CD14-positive monocyte (primary cell): ENCODE measurements at regions of chr19 and their contacts with region 1.

Region 1: GRCh38 chr19:1438035-1438932 is at the start of gene RPS15:
- DNase-seq: peak; percentile 89 to 96 (median 96)
- H3K4me3 ChIP-seq: peak within 1 kb of the TSS; percentile 52 to 93 (median 82)
- H3K4me3 Mint-ChIP-seq: peak within 1 kb of the TSS; percentile 89 to 95
- H3K27ac ChIP-seq: peak within 1 kb of the TSS; percentile 85 to 88
- H3K27ac Mint-ChIP-seq: peak within 1 kb of the TSS; percentile 95 to 99 (median 99)
- H3K4me1 ChIP-seq: peaks cover 13 to 22% of the 10 kb centered on the region in 2 donors
- H3K4me1 Mint-ChIP-seq: peaks cover 27% of the 10 kb centered on the region
- H3K27me3 ChIP-seq: no peaks in the 10 kb centered on the region
- H3K27me3 Mint-ChIP-seq: peaks cover 0 to 4% (median 1%) of the 10 kb centered on the region in 3 donors
- CTCF ChIP-seq: peak; percentile 97
- polyA plus RNA-seq, gene RPS15: 1,318 to 3,451 (median 1,526) TPM

Region 2: DNA sequence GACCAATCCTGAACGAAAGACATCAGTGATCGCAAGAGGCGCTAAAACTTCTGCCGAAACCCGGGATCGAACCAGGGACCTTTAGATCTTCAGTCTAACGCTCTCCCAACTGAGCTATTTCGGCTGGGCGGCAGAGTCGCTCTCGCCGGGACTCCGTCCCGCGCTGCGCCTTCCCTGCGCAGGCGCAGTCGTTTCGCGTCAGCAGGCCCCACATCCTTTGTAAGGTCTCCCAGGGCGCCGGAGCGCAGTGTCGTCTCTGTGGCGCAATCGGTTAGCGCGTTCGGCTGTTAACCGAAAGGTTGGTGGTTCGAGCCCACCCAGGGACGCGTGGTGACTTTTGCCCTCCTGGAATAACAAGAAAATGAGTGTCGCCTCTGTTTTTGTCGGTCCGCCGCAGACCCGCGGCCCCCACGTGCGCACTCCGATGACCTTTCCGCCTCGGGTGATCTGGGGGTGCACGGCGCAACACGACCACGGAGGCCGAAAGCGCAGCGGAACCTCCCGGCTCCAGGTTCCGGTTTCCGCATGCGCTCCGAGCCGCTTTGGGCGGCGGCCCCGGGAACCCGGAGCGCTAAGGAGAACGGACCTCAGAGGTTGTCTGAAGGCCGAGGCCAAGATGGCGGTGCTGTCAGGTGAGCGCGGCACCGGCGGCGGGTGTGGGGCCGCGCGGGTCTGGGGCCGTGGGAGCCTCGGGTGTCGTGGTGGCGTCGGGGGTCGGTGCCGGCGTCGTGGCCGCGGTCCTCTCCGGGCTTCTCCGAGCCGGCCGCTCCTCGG is 54.8 kb before region 1 on chr19 and contains the start of gene NDUFS7:
- intact Hi-C with region 1: loop called in 1 of 2 experiments (anchors 2 kb)
- DNase-seq: peak; percentile 88 to 95 (median 92)
- H3K4me3 ChIP-seq: peak within 1 kb of the TSS; percentile 83 to 96 (median 88)
- H3K4me3 Mint-ChIP-seq: peak within 1 kb of the TSS; percentile 82 to 88
- H3K27ac ChIP-seq: peak within 1 kb of the TSS; percentile 80 to 86
- H3K27ac Mint-ChIP-seq: peak within 1 kb of the TSS; percentile 89 to 97 (median 95)
- H3K4me1 ChIP-seq: peaks cover 12 to 14% of the 10 kb centered on the region in 2 donors
- H3K4me1 Mint-ChIP-seq: peaks cover 20% of the 10 kb centered on the region
- H3K27me3 ChIP-seq: no peaks in the 10 kb centered on the region
- H3K27me3 Mint-ChIP-seq: peaks cover 1 to 15% (median 9%) of the 10 kb centered on the region in 3 donors
- CTCF ChIP-seq: no peak
- polyA plus RNA-seq, gene NDUFS7: 119 to 232 (median 211) TPM